ENCODE measurements at regions of chr10 and their contacts with region 1.

Region 1: DNA sequence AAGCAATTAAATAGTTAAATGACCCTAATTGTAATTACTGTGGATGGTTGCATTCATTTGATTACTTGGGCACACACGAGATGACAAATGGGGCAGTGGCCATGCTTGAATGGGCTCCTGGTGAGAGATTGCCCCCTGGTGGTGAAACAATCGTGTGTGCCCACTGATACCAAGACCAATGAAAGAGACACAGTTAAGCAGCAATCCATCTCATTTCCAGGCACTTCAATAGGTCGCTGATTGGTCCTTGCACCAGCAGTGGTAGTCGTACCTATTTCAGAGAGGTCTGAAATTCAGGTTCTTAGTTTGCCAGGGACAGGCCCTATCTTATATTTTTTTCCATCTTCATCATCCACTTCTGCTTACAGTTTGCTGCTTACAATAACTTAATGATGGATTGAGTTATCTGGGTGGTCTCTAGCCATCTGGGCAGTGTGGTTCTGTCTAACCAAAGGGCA is 8.3 kb downstream of the PCBD1 start:
- DNase-seq: peak; percentile 77
- ATAC-seq: peak; percentile 91
- H3K4me3 ChIP-seq: no peak overlapping the region
- H3K27ac ChIP-seq: no peak overlapping the region
- H3K4me1 ChIP-seq: no peaks in the 10 kb centered on the region
- H3K27me3 ChIP-seq: no peaks in the 10 kb centered on the region
- CTCF ChIP-seq: peak; percentile 92
- EP300 ChIP-seq: no peak
- POLR2A ChIP-seq: no peak
- RAD21 ChIP-seq: peak; percentile 85

Region 2: GRCh38 chr10:70549962-70550458 is 330.1 kb before region 1 on chr10:
- CTCF ChIA-PET with region 1: interaction called, 15 read pairs
- POLR2A ChIA-PET with region 1: no interaction called
- in situ Hi-C with region 1: loop called (anchors 10 kb)
- intact Hi-C with region 1: loop called (anchors 2 kb)
- DNase-seq: peak; percentile 44
- ATAC-seq: peak; percentile 82
- H3K4me3 ChIP-seq: no peak overlapping the region
- H3K27ac ChIP-seq: no peak overlapping the region
- H3K4me1 ChIP-seq: peaks cover 21% of the 10 kb centered on the region
- H3K27me3 ChIP-seq: peaks cover 1 to 4% of the 10 kb centered on the region in 2 experiments; a peak in 2 of 5 replicates
- CTCF ChIP-seq: peak; percentile 93
- EP300 ChIP-seq: no peak
- POLR2A ChIP-seq: no peak
- RAD21 ChIP-seq: peak; percentile 84

Region 3: DNA sequence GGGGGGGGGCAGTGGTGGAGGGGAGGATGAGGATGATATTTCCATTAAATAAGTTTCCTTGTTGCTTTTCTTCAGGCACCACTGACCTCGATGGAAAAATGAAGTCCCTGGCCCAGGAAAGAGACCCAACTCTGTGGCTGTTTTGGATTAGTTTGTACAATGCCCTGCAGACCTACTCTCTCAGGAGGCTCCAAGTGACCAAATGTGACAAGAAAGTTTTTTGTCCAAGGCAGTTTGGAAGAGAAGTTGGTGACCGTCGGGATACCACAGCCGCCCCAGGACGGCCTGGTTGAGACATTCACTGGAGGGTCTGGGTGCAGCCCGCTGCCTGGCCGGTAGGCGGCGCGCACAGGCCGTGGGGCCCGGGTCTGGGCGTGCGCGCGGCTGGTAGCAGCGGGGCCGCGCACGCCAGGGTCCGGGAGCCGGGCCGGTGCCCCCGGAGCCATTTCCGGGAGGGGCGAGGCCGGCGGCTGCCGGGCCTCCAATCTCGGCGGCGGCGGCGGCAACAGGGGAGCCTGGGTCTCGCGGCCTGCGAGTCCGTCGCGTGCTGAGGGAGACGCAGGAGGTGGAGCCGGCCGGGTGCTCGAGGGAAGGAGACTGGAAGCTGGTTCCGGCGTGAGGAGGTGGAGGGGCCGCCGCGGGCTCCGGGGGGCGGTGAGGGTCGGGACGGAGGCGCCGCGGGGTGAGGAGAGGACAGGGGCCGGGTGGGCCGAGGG is 64.4 kb before region 1 on chr10 and contains the start of gene SGPL1:
- CTCF ChIA-PET with region 1: interaction called, 50 read pairs
- POLR2A ChIA-PET with region 1: no interaction called
- in situ Hi-C with region 1: loop called (anchors 5 kb)
- intact Hi-C with region 1: loop called (anchors 1 kb)
- DNase-seq: peak; percentile 63
- ATAC-seq: peak; percentile 85
- H3K4me3 ChIP-seq: peak within 1 kb of the TSS; percentile 78 to 92 (median 92)
- H3K27ac ChIP-seq: peak within 1 kb of the TSS; percentile 72
- H3K4me1 ChIP-seq: peaks cover 29% of the 10 kb centered on the region
- H3K27me3 ChIP-seq: no peaks in the 10 kb centered on the region; a peak in 1 of 5 replicates
- CTCF ChIP-seq: peak; percentile 89
- EP300 ChIP-seq: no peak
- POLR2A ChIP-seq: peak in 1 of 2 experiments; percentile 52; a peak in 2 of 4 replicates
- RAD21 ChIP-seq: peak; percentile 99
- total RNA-seq, gene SGPL1: 19.0 and 25.0 TPM in 2 replicates

Region 4: DNA sequence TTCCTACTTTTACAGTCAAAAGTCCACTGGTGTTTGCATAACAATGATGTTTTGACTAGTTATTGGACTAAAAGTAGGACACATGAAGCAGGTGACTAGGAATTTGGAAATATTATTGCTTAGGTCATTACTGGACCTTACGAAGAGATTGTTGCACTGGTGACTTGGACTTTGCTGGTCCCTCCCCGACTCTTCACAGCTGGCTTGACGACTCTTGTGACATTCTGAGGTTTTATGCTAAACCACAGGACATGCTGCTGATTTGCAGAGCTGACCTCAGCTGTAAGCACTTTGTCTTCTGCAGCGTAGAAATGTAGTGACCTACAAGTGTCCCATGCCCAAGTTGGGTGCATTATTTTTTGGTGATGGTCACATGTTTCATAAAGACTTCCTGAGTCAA is 13.7 kb before region 1 on chr10:
- CTCF ChIA-PET with region 1: no interaction called
- POLR2A ChIA-PET with region 1: no interaction called
- in situ Hi-C with region 1: no loop called
- intact Hi-C with region 1: no loop called
- DNase-seq: no peak
- ATAC-seq: no peak
- H3K4me3 ChIP-seq: no peak overlapping the region
- H3K27ac ChIP-seq: no peak overlapping the region
- H3K4me1 ChIP-seq: 0 out of 2 replicates have a peak, but pooled peaks cover 6% of the 10 kb centered on the region
- H3K27me3 ChIP-seq: no peaks in the 10 kb centered on the region; a peak in 1 of 5 replicates
- CTCF ChIP-seq: no peak
- EP300 ChIP-seq: no peak
- POLR2A ChIP-seq: no peak
- RAD21 ChIP-seq: no peak

Region 5: GRCh38 chr10:70958396-70958795 is 78.3 kb after region 1 on chr10:
- CTCF ChIA-PET with region 1: no interaction called
- POLR2A ChIA-PET with region 1: no interaction called
- in situ Hi-C with region 1: no loop called
- intact Hi-C with region 1: no loop called
- DNase-seq: no peak
- ATAC-seq: no peak
- H3K4me3 ChIP-seq: no peak overlapping the region
- H3K27ac ChIP-seq: no peak overlapping the region
- H3K4me1 ChIP-seq: no peaks in the 10 kb centered on the region
- H3K27me3 ChIP-seq: peaks cover under 1 to 21% of the 10 kb centered on the region in 2 experiments; a peak in 2 of 5 replicates
- CTCF ChIP-seq: no peak
- EP300 ChIP-seq: no peak
- POLR2A ChIP-seq: no peak
- RAD21 ChIP-seq: no peak

Region 6: GRCh38 chr10:70969188-70969587 is 89.1 kb after region 1 on chr10:
- CTCF ChIA-PET with region 1: no interaction called
- POLR2A ChIA-PET with region 1: no interaction called
- in situ Hi-C with region 1: no loop called
- intact Hi-C with region 1: no loop called
- DNase-seq: no peak
- ATAC-seq: no peak
- H3K4me3 ChIP-seq: no peak overlapping the region
- H3K27ac ChIP-seq: no peak overlapping the region
- H3K4me1 ChIP-seq: no peaks in the 10 kb centered on the region
- H3K27me3 ChIP-seq: peaks cover 5 to 11% of the 10 kb centered on the region in 2 experiments; a peak in 3 of 5 replicates
- CTCF ChIP-seq: no peak
- EP300 ChIP-seq: no peak
- POLR2A ChIP-seq: no peak
- RAD21 ChIP-seq: no peak

Measured in HepG2 (cell line).